B cell (primary cell): ENCODE measurements at regions of chr10 and their contacts with region 1.

Region 1: DNA sequence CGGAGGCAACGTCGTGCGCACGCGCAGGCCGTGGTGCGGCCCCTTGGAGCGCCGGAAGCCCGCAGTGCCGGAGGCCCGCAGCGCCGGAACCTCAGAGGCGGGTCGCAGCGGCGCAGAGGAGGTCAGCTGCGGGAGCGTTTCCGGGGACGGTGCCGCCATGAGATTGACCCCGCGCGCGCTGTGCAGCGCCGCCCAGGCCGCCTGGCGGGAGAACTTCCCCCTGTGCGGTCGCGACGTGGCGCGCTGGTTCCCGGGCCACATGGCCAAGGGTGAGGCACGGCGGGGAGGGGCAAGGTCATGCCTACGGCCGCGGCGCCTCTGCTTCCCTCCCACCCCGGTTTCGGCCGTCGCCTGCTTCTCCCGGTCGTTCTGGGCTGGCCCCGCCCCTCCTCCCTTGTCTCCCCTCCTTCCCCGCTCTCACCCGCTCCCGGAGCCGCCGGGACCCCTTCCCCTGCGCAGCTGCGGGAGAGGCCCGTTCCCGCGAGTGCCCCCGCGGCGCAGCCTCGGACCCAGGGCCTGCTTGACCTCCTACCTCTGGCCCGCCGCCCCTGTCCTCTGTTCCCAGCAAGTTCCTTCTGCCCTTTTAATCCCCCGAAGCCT is at the start of gene MTG1:
- DNase-seq: peak; percentile 95
- ATAC-seq: peak; percentile 66
- H3K4me3 ChIP-seq: peak within 1 kb of the TSS; percentile 64 to 84 (median 74)
- H3K4me3 Mint-ChIP-seq: peak within 1 kb of the TSS; percentile 92
- H3K27ac ChIP-seq: peak within 1 kb of the TSS; percentile 51 to 81
- H3K27ac Mint-ChIP-seq: peak within 1 kb of the TSS; percentile 89
- H3K4me1 ChIP-seq: peaks cover 44 to 56% of the 10 kb centered on the region in 2 donors
- H3K4me1 Mint-ChIP-seq: peaks cover 59% of the 10 kb centered on the region
- H3K27me3 ChIP-seq: no peaks in the 10 kb centered on the region
- H3K27me3 Mint-ChIP-seq: no peaks in the 10 kb centered on the region
- CTCF ChIP-seq: no peak
- total RNA-seq, gene MTG1: 85.1 and 90.0 TPM in 2 replicates

Region 2: GRCh38 chr10:133309111-133309719 is 84.9 kb before region 1 on chr10:
- CTCF ChIA-PET with region 1: no interaction called
- POLR2A ChIA-PET with region 1: no interaction called
- intact Hi-C with region 1: loop called (anchors 1 kb)
- DNase-seq: no peak
- ATAC-seq: peak; percentile 90
- H3K4me3 ChIP-seq: peak overlapping the region in 4 of 5 experiments; percentile 73 to 94 (median 92)
- H3K4me3 Mint-ChIP-seq: peak overlapping the region; percentile 78
- H3K27ac ChIP-seq: peak overlapping the region; percentile 96 to 97
- H3K27ac Mint-ChIP-seq: peak overlapping the region; percentile 88
- H3K4me1 ChIP-seq: peaks cover 21 to 41% of the 10 kb centered on the region in 2 donors
- H3K4me1 Mint-ChIP-seq: peaks cover 37% of the 10 kb centered on the region
- H3K27me3 ChIP-seq: no peaks in the 10 kb centered on the region
- H3K27me3 Mint-ChIP-seq: no peaks in the 10 kb centered on the region
- CTCF ChIP-seq: no peak

Region 3: DNA sequence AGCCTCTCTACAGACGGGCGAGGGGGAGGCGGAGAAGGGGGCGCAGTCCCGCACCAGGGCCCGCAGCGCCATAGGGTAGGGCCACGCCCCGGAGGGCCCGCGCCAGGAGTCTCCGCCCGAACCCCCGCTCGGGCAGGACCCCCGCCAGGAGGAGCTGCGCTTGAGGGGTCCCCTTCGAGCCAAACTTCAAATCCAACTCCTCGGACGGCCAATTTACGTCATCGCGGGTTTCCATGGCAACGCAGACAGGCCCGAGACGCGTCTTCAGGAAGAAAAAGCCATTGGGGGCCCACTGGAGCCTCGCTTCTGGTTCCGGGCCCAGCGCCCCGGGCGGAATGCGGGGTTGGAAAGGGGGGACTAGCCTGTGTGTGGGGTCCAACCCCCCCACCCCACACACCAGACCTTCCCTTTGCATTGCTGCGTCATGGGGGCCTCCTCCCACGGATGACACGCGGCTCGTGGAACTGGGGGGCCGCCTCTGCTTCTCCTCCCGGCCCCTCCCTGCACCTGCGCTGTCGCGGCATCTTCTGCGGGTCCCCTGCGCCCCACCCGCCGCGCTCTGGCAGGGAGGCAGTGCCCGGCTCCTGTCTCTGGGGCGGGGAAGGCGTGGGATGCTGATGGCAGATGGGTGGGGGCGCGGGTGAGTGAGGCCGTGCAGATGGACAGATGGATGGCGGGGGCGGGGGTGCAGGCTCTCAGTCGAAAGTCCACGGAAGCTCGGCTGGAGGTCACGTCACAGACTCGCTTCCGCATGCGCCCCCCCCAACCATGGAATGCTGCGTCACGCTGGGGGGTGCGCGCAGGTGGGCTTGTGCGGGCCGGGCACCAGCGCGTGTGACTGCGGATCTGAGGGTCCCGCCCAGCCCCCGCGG is 58.7 kb before region 1 on chr10:
- CTCF ChIA-PET with region 1: interaction called, 6 read pairs
- POLR2A ChIA-PET with region 1: no interaction called
- intact Hi-C with region 1: loop called (anchors 1 kb)
- DNase-seq: peak; percentile 91
- ATAC-seq: peak; percentile 44
- H3K4me3 ChIP-seq: peak overlapping the region in 4 of 5 experiments; percentile 40 to 51 (median 46)
- H3K4me3 Mint-ChIP-seq: peak overlapping the region; percentile 93
- H3K27ac ChIP-seq: no peak overlapping the region
- H3K27ac Mint-ChIP-seq: peak overlapping the region; percentile 59
- H3K4me1 ChIP-seq: peaks cover 35 to 44% of the 10 kb centered on the region in 2 donors
- H3K4me1 Mint-ChIP-seq: peaks cover 10% of the 10 kb centered on the region
- H3K27me3 ChIP-seq: peaks cover 0 to 57% (median 34%) of the 10 kb centered on the region in 4 experiments
- H3K27me3 Mint-ChIP-seq: peaks cover 10% of the 10 kb centered on the region
- CTCF ChIP-seq: no peak

Region 4: GRCh38 chr10:133373104-133373624 is 21.0 kb before region 1 on chr10 and contains the start of gene ECHS1:
- CTCF ChIA-PET with region 1: interaction called, 7 read pairs
- POLR2A ChIA-PET with region 1: interaction called, 5 read pairs
- intact Hi-C with region 1: loop called (anchors 1 kb)
- DNase-seq: peak; percentile 92
- ATAC-seq: peak; percentile 96
- H3K4me3 ChIP-seq: peak within 1 kb of the TSS; percentile 53 to 74 (median 69)
- H3K4me3 Mint-ChIP-seq: peak within 1 kb of the TSS; percentile 87
- H3K27ac ChIP-seq: peak within 1 kb of the TSS; percentile 65 to 77
- H3K27ac Mint-ChIP-seq: peak within 1 kb of the TSS; percentile 84
- H3K4me1 ChIP-seq: peaks cover 15 to 27% of the 10 kb centered on the region in 2 donors
- H3K4me1 Mint-ChIP-seq: peaks cover 18% of the 10 kb centered on the region
- H3K27me3 ChIP-seq: no peaks in the 10 kb centered on the region
- H3K27me3 Mint-ChIP-seq: no peaks in the 10 kb centered on the region
- CTCF ChIP-seq: no peak
- total RNA-seq, gene ECHS1: 27.5 and 29.5 TPM in 2 replicates

Region 5: GRCh38 chr10:133405844-133406527 is 11.8 kb after region 1 on chr10:
- CTCF ChIA-PET with region 1: no interaction called
- POLR2A ChIA-PET with region 1: interaction called, 10 read pairs
- intact Hi-C with region 1: no loop called
- DNase-seq: peak; percentile 8
- ATAC-seq: no peak
- H3K4me3 ChIP-seq: no peak overlapping the region
- H3K4me3 Mint-ChIP-seq: no peak overlapping the region
- H3K27ac ChIP-seq: peak overlapping the region in 1 of 2 donors; percentile 11
- H3K27ac Mint-ChIP-seq: peak overlapping the region; percentile 56
- H3K4me1 ChIP-seq: peaks cover 15 to 16% of the 10 kb centered on the region in 2 donors
- H3K4me1 Mint-ChIP-seq: peaks cover 55% of the 10 kb centered on the region
- H3K27me3 ChIP-seq: no peaks in the 10 kb centered on the region
- H3K27me3 Mint-ChIP-seq: no peaks in the 10 kb centered on the region
- CTCF ChIP-seq: no peak